ENCODE measurements at regions of chr6 and their contacts with region 1.

Region 1: DNA sequence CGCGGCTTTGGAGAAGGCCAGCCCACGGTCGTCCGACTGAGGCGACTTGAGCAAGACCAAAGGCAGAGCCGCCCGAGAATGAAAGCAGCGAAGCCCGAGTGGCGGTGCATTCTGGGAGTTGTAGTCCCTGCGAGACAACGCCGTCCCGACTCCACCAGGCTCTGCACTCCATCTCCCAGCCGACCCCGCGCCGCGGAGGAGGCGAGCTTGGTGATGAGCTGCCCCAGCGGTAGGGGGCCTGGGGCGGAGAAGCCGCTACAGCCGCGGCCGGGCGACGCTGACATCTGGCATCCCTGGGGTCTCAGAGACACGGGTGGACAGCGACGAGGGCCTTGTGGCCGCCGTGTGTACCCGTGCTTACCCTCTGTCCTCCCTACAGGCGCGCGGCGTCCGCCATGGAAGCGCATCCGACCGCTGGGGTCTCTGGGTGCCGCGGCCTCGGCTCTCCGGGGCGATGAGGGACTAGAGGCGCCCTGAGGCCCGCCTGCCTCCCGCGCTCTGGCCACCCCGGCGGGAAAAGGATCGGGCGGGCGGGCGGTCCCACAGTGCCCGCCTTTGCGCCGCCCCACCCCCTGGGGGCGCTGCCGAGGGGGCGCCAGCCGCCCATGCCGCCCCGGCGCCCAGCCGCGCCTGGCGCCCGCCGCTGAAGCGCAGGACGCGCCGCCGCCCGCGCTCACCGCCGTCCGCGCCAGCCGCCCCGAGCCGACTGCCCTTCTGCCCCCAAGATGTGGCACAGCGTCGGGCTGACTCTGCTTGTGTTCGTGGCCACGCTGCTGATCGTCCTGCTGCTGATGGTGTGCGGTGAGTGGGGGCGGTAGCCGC is at the start of gene SMIM13:
- DNase-seq: peak; percentile 99
- H3K4me3 Mint-ChIP-seq: peak within 1 kb of the TSS; percentile 92
- H3K27ac Mint-ChIP-seq: peak within 1 kb of the TSS; percentile 95
- H3K4me1 Mint-ChIP-seq: peaks cover 26% of the 10 kb centered on the region
- H3K27me3 Mint-ChIP-seq: peaks cover 2% of the 10 kb centered on the region
- total RNA-seq, gene SMIM13: 15.2 and 15.6 TPM in 2 replicates

Region 2: DNA sequence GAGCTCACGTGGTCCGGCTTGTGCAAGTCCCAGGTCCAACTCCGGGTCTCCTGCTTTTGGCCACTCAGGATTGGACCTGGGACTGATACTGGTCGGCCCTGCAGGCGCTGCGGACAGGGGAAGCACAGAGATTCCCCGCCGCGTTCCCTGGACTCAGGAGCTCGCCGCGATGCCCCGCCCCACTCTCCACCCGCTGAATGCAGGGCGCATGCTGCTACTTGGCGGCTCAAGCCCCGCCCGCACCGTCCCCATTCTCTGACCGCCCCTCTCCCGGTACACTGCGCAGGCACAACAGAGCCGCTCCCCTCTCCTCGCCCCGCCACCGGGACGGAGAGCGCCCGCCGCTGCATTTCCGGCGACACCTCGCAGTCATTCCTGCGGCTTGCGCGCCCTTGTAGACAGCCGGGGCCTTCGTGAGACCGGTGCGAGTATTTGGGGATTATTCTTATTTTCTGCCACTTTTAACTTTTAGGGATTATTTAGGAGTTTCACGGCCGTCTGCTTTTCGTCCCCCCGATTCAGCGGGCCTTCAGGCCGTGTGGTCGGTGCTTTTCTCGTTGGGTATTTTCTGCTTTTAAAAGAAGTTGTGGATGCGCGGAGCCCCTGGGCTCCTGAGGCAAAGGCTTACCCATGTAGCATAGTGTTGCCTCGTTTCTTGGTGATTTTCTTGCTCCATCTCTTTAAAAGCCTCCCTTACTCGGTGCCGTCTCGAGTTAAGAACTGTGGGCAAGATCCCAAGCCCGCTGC is 370.8 kb before region 1 on chr6 and contains the start of gene TMEM14C:
- intact Hi-C with region 1: loop called (anchors 1 kb)
- DNase-seq: peak; percentile 97
- H3K4me3 Mint-ChIP-seq: peak within 1 kb of the TSS; percentile 89
- H3K27ac Mint-ChIP-seq: peak within 1 kb of the TSS; percentile 93
- H3K4me1 Mint-ChIP-seq: peaks cover 27% of the 10 kb centered on the region
- H3K27me3 Mint-ChIP-seq: no peaks in the 10 kb centered on the region
- total RNA-seq, gene TMEM14C: 65.0 and 67.7 TPM in 2 replicates

Region 3: GRCh38 chr6:10954590-10955010 is 139.2 kb before region 1 on chr6:
- intact Hi-C with region 1: no loop called
- DNase-seq: peak; percentile 90
- H3K4me3 Mint-ChIP-seq: no peak overlapping the region
- H3K27ac Mint-ChIP-seq: no peak overlapping the region
- H3K4me1 Mint-ChIP-seq: no peaks in the 10 kb centered on the region
- H3K27me3 Mint-ChIP-seq: peaks cover 11% of the 10 kb centered on the region

Region 4: DNA sequence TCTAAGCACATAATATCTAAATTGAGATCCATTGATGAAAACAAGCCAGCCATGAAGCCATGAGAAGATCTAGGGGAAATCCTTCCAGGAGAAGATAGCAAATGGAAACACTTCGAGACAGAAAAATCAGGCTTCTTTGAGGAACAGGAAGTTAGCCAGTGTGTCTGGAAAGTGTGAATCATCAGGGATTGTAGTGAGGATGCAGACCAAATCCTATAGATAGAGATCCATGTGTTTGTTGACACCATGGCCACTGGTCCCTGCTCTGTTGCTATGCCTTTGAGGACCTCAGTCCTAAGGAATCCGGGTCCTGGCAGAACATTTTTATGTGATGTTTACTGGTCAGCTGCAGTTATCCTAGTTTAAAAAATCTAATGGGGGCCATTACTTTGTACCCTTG is 43.1 kb before region 1 on chr6:
- intact Hi-C with region 1: no loop called
- DNase-seq: no peak
- H3K4me3 Mint-ChIP-seq: no peak overlapping the region
- H3K27ac Mint-ChIP-seq: no peak overlapping the region
- H3K4me1 Mint-ChIP-seq: no peaks in the 10 kb centered on the region
- H3K27me3 Mint-ChIP-seq: peaks cover 43% of the 10 kb centered on the region

Region 5: DNA sequence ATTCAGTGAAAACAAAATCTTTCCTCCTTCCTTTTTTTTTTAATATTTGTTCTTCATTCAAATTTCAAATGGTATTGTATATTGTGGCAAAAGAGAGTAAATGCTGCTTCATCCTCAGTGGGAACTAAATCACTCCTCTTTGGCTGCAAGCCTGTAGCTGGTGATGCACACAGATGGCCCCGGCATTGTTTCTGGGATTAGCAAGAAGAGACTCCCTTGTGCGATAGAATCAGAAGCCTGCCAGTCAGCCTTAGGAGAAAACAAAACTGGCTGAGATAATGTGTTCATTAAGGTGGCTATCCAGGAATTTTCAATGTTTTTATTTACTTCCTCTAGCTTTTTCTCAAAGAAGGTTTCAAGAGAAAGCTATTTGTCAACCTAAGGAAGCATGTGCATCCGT is 29.0 kb before region 1 on chr6:
- intact Hi-C with region 1: no loop called
- DNase-seq: no peak
- H3K4me3 Mint-ChIP-seq: no peak overlapping the region
- H3K27ac Mint-ChIP-seq: no peak overlapping the region
- H3K4me1 Mint-ChIP-seq: no peaks in the 10 kb centered on the region
- H3K27me3 Mint-ChIP-seq: peaks cover 10% of the 10 kb centered on the region

Region 6: GRCh38 chr6:11111769-11112437 is 18.1 kb after region 1 on chr6:
- intact Hi-C with region 1: loop called (anchors 2 kb)
- DNase-seq: no peak
- H3K4me3 Mint-ChIP-seq: peak overlapping the region; percentile 46
- H3K27ac Mint-ChIP-seq: peak overlapping the region; percentile 51
- H3K4me1 Mint-ChIP-seq: peaks cover 20% of the 10 kb centered on the region
- H3K27me3 Mint-ChIP-seq: no peaks in the 10 kb centered on the region

Region 7: GRCh38 chr6:11537229-11538051 is 443.6 kb after region 1 on chr6 and contains the start of gene TMEM170B:
- intact Hi-C with region 1: loop called (anchors 1 kb)
- DNase-seq: peak; percentile 97
- H3K4me3 Mint-ChIP-seq: peak within 1 kb of the TSS; percentile 85
- H3K27ac Mint-ChIP-seq: peak within 1 kb of the TSS; percentile 77
- H3K4me1 Mint-ChIP-seq: peaks cover 4% of the 10 kb centered on the region
- H3K27me3 Mint-ChIP-seq: peaks cover 61% of the 10 kb centered on the region
- total RNA-seq, gene TMEM170B: 0.72 and 0.73 TPM in 2 replicates

Measured in activated CD4-positive, alpha-beta T cell treated with anti-CD3 and anti-CD28 coated beads, Interleukin-2, amount 10 ng/mL, durations not matched to agents 24 days and 14 days (primary cell).